ENCODE measurements at regions of chr4 and their contacts with region 1.

Region 1: DNA sequence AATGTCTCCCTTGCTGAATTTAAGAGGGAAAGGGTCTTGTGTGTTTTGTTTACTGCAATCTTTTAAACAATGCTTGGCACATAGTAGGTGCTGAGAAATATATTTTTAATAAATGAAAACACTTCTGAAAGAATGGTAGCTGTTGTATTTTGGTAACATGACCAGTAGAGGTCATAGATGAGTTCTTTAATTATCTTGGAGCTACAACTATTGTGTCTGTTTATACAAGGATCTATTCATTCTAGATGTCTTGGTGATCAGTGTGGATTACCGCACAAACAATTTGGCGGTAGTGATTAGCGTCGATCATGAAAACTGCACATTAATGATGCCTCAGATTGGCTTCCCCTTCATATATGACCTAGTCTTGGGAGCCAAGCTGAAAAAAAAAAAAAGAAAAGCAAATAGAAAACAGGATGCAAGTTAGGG is 21.4 kb upstream of the SCRG1 start:
- DNase-seq: no peak
- ATAC-seq: no peak
- H3K4me3 ChIP-seq: no peak overlapping the region
- H3K27ac ChIP-seq: no peak overlapping the region
- H3K4me1 ChIP-seq: peaks cover 0 to 1% of the 10 kb centered on the region in 2 donors
- H3K27me3 ChIP-seq: no peaks in the 10 kb centered on the region

Region 2: GRCh38 chr4:173318648-173319211 is 101.6 kb before region 1 on chr4:
- intact Hi-C with region 1: loop called (anchors 2 kb)
- DNase-seq: no peak
- ATAC-seq: peak; percentile 69
- H3K4me3 ChIP-seq: no peak overlapping the region
- H3K27ac ChIP-seq: no peak overlapping the region
- H3K4me1 ChIP-seq: no peaks in the 10 kb centered on the region
- H3K27me3 ChIP-seq: no peaks in the 10 kb centered on the region

Region 3: DNA sequence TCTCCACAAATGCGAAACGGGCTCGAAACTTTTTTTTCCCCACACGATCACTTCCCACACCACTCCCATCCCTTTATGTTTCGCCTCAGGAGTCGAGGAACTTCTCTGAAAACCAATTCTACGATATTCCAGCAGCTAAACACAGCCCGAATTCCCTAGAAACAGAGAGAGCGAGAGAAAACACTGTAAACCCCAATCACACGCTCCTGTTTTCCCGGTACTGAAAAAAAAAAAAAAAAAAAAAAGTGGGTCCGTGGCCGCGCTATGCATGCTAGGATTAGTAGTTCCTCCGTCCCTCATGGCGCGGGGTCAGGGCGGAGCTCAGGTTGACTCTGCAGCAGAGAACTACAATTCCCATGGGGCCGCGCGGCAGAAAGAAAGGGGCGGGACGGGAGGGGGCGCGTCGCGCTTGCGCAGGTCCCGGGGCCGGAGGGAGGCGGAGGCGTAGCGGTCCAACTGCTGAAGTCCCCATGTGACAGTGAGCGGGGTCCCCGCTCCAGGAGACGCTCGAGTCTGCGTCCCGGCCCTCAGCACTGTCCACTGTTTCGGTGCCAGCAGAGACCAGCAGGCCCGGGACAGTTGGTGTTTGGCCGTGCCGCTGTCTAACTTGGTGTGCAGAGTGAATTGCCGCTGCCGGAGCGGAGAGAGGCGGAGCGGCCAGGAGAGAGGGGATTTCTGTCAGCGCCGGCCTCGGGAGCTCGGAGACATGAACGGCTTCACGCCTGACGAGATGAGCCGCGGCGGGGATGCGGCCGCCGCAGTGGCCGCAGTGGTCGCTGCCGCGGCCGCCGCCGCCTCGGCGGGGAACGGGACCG is 49.7 kb before region 1 on chr4 and contains the start of gene SAP30:
- intact Hi-C with region 1: loop called in 1 of 2 experiments (anchors 5 kb)
- DNase-seq: peak; percentile 100
- ATAC-seq: peak; percentile 98
- H3K4me3 ChIP-seq: peak within 1 kb of the TSS; percentile 84 to 88
- H3K27ac ChIP-seq: peak within 1 kb of the TSS; percentile 78 to 98
- H3K4me1 ChIP-seq: no peaks in the 10 kb centered on the region
- H3K27me3 ChIP-seq: no peaks in the 10 kb centered on the region
- total RNA-seq, gene SAP30: 33.4 to 34.7 TPM

Region 4: GRCh38 chr4:173478201-173478912 is 58.0 kb after region 1 on chr4:
- intact Hi-C with region 1: loop called in 1 of 2 experiments (anchors 5 kb)
- DNase-seq: no peak
- ATAC-seq: no peak
- H3K4me3 ChIP-seq: no peak overlapping the region
- H3K27ac ChIP-seq: peak overlapping the region; percentile 40 to 64
- H3K4me1 ChIP-seq: peaks cover 2 to 5% of the 10 kb centered on the region in 2 donors
- H3K27me3 ChIP-seq: no peaks in the 10 kb centered on the region

Region 5: GRCh38 chr4:173494013-173494970 is 74.0 kb after region 1 on chr4:
- intact Hi-C with region 1: loop called (anchors 1 kb)
- DNase-seq: peak; percentile 68 to 74
- ATAC-seq: peak; percentile 75
- H3K4me3 ChIP-seq: peak overlapping the region; percentile 37 to 76
- H3K27ac ChIP-seq: no peak overlapping the region
- H3K4me1 ChIP-seq: peaks cover 0 to 4% of the 10 kb centered on the region in 2 donors
- H3K27me3 ChIP-seq: no peaks in the 10 kb centered on the region

Region 6: GRCh38 chr4:173752610-173753230 is 332.4 kb after region 1 on chr4:
- intact Hi-C with region 1: loop called in 1 of 2 experiments (anchors 10 kb)
- DNase-seq: peak in 1 of 2 donors; percentile 38
- ATAC-seq: no peak
- H3K4me3 ChIP-seq: no peak overlapping the region
- H3K27ac ChIP-seq: no peak overlapping the region
- H3K4me1 ChIP-seq: no peaks in the 10 kb centered on the region
- H3K27me3 ChIP-seq: no peaks in the 10 kb centered on the region